Activated CD4-positive, alpha-beta memory T cell treated with anti-CD3 and anti-CD28 coated beads for 36 hours (primary cell): ENCODE measurements at regions of chr3 and their contacts with region 1.

Region 1: GRCh38 chr3:151227807-151228665 is 25.0 kb upstream of the GPR171 start:
- DNase-seq: peak; percentile 87
- H3K4me3 Mint-ChIP-seq: no peak overlapping the region
- H3K27ac Mint-ChIP-seq: peak overlapping the region; percentile 42
- H3K4me1 Mint-ChIP-seq: peaks cover 52% of the 10 kb centered on the region
- H3K27me3 Mint-ChIP-seq: no peaks in the 10 kb centered on the region

Region 2: GRCh38 chr3:151191095-151191494 is 36.9 kb before region 1 on chr3:
- CTCF ChIA-PET with region 1: interaction called, 10 read pairs
- POLR2A ChIA-PET with region 1: no interaction called
- intact Hi-C with region 1: loop called (anchors 5 kb)
- DNase-seq: no peak
- H3K4me3 Mint-ChIP-seq: peak overlapping the region; percentile 47
- H3K27ac Mint-ChIP-seq: peak overlapping the region; percentile 84
- H3K4me1 Mint-ChIP-seq: peaks cover 63% of the 10 kb centered on the region
- H3K27me3 Mint-ChIP-seq: no peaks in the 10 kb centered on the region

Region 3: GRCh38 chr3:151216641-151217607 is 11.1 kb before region 1 on chr3:
- CTCF ChIA-PET with region 1: interaction called, 12 read pairs
- POLR2A ChIA-PET with region 1: no interaction called
- intact Hi-C with region 1: no loop called
- DNase-seq: no peak
- H3K4me3 Mint-ChIP-seq: no peak overlapping the region
- H3K27ac Mint-ChIP-seq: no peak overlapping the region
- H3K4me1 Mint-ChIP-seq: peaks cover 19% of the 10 kb centered on the region
- H3K27me3 Mint-ChIP-seq: no peaks in the 10 kb centered on the region

Region 4: GRCh38 chr3:151282921-151283320 is 54.9 kb after region 1 on chr3:
- CTCF ChIA-PET with region 1: interaction called, 155 read pairs
- POLR2A ChIA-PET with region 1: interaction called, 8 read pairs
- intact Hi-C with region 1: loop called (anchors 1 kb)
- DNase-seq: no peak
- H3K4me3 Mint-ChIP-seq: no peak overlapping the region
- H3K27ac Mint-ChIP-seq: peak overlapping the region; percentile 62
- H3K4me1 Mint-ChIP-seq: peaks cover 32% of the 10 kb centered on the region
- H3K27me3 Mint-ChIP-seq: no peaks in the 10 kb centered on the region

Region 5: GRCh38 chr3:151327571-151328198 is 99.6 kb after region 1 on chr3:
- CTCF ChIA-PET with region 1: interaction called, 16 read pairs
- POLR2A ChIA-PET with region 1: no interaction called
- intact Hi-C with region 1: loop called (anchors 1 kb)
- DNase-seq: no peak
- H3K4me3 Mint-ChIP-seq: no peak overlapping the region
- H3K27ac Mint-ChIP-seq: no peak overlapping the region
- H3K4me1 Mint-ChIP-seq: peaks cover 11% of the 10 kb centered on the region
- H3K27me3 Mint-ChIP-seq: peaks cover 13% of the 10 kb centered on the region

Region 6: GRCh38 chr3:151918253-151919029 is 690.4 kb after region 1 on chr3:
- CTCF ChIA-PET with region 1: interaction called, 4 read pairs
- POLR2A ChIA-PET with region 1: no interaction called
- intact Hi-C with region 1: loop called (anchors 1 kb)
- DNase-seq: no peak
- H3K4me3 Mint-ChIP-seq: no peak overlapping the region
- H3K27ac Mint-ChIP-seq: no peak overlapping the region
- H3K4me1 Mint-ChIP-seq: no peaks in the 10 kb centered on the region
- H3K27me3 Mint-ChIP-seq: no peaks in the 10 kb centered on the region